BJ (cell line): ENCODE measurements at regions of chr14 and their contacts with region 1.

Region 1: DNA sequence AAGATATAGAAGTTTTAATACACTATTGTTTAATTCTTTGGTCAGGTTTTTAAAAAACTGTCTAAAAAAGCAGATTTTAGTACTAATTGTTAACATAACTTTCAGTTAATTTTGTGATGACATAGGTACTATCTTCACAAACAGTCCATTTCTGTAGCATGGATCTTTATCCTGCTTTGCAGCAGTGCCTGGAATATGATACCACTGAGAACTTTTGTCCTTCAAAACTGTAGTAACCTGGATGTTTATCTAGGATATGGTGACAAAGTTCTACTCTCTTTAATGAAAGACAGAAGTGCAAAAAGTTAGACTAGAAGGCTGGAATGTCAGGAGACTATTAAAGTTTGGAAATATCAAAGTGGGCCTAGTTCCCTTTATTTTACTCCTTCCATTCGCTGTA is 159.9 kb downstream of the SYNE2 start:
- DNase-seq: no peak
- H3K4me3 ChIP-seq: no peak overlapping the region
- H3K27me3 ChIP-seq: no peaks in the 10 kb centered on the region
- CTCF ChIP-seq: no peak

Region 2: GRCh38 chr14:63986789-63987533 is 25.8 kb before region 1 on chr14:
- CTCF ChIA-PET with region 1: interaction called, 4 read pairs
- POLR2A ChIA-PET with region 1: interaction called, 10 read pairs
- DNase-seq: peak; percentile 4
- H3K4me3 ChIP-seq: no peak overlapping the region
- H3K27me3 ChIP-seq: no peaks in the 10 kb centered on the region
- CTCF ChIP-seq: no peak

Region 3: DNA sequence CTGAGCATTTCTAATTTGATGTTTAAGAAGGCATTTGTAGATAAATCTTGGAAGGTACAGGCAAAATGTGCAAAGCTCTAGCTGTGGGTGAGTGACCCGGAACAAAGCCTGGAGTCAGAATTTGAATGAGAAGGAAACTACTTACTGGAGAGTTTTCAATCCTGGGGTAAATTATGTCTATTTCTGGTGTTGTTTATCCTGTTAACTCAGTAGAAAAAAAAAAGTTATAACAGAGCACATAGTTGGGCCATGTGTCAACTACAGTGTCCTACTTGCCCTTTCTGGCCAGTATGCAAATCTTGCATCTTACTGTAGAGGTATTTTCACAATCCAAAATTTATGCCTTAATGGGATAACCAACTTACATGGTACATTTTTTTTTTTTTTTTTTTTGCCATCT is 22.4 kb after region 1 on chr14:
- CTCF ChIA-PET with region 1: no interaction called
- POLR2A ChIA-PET with region 1: no interaction called
- DNase-seq: peak; percentile 21
- H3K4me3 ChIP-seq: no peak overlapping the region
- H3K27me3 ChIP-seq: no peaks in the 10 kb centered on the region
- CTCF ChIP-seq: no peak

Region 4: DNA sequence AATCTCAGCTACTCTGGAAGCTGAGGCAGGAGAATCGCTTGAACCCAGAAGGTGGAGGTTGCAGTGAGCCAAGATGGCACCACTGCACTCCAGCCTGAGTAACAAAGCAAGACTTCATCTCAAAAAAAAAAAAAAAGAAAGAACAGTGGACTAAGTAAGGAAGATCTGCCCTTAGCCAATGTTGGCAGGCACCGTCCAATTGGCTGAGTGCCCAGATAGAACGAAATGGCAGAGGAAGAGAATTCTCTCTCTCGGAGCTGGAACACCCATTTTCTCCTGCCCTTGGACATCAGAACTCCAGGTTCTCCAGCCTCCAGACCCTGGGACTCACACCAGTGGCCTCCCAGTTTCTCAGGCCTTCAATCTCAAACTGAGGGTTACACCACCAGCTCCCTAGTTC is 231.6 kb after region 1 on chr14:
- CTCF ChIA-PET with region 1: no interaction called
- POLR2A ChIA-PET with region 1: no interaction called
- DNase-seq: no peak
- H3K4me3 ChIP-seq: no peak overlapping the region
- H3K27me3 ChIP-seq: peaks cover 2% of the 10 kb centered on the region
- CTCF ChIP-seq: no peak

Region 5: DNA sequence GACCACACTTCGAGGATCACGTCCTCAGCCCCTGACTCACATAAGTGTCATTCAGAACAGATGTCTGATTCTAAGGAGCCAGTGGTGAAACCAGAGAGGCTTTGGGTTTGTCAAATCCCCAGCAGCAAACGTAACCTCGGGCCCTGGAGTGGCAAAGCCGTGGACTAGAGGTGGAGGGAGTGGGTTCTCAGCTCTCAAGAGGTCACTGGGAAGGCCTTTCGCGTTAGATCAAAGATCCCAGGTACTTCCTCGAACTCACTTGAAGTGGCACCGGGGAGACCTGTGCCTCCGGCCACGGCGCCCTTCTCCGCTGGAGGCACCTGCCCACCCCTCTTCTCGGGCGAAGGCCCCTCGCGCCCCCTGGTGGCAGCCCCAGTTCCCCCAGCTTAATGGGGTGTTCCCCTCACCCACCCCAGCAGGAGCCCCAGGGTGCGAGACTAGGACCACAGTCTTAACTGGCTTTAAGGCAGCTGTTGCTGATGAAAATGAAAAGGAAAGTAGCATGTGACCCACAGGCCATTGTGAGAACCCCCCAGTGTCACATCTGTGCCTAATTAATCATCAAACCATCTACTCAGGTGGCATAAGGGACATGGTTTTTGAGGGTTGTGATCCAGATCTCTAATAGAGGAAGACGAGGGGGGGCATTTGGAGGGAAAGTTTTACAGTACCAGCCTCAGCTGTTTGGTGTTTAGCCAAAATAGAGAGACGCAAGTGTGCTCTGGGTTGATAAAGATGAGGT is 282.1 kb after region 1 on chr14:
- CTCF ChIA-PET with region 1: interaction called, 20 read pairs
- POLR2A ChIA-PET with region 1: no interaction called
- DNase-seq: no peak
- H3K4me3 ChIP-seq: no peak overlapping the region
- H3K27me3 ChIP-seq: peaks cover 16% of the 10 kb centered on the region
- CTCF ChIP-seq: peak; percentile 90

Region 6: GRCh38 chr14:64303471-64303917 is 290.8 kb after region 1 on chr14:
- CTCF ChIA-PET with region 1: interaction called, 54 read pairs
- POLR2A ChIA-PET with region 1: no interaction called
- DNase-seq: no peak
- H3K4me3 ChIP-seq: no peak overlapping the region
- H3K27me3 ChIP-seq: peaks cover under 1% of the 10 kb centered on the region; the same call in 1 of the 2 replicates
- CTCF ChIP-seq: peak; percentile 73